ENCODE measurements at regions of chr9 and their contacts with region 1.

Region 1: GRCh38 chr9:27967210-27967609 is 393.9 kb upstream of the C9orf72 start:
- DNase-seq: no peak
- H3K4me3 Mint-ChIP-seq: no peak overlapping the region
- H3K27ac Mint-ChIP-seq: no peak overlapping the region
- H3K4me1 Mint-ChIP-seq: no peaks in the 10 kb centered on the region
- H3K27me3 Mint-ChIP-seq: no peaks in the 10 kb centered on the region

Region 2: GRCh38 chr9:27829621-27830020 is 137.6 kb before region 1 on chr9:
- intact Hi-C with region 1: no loop called
- DNase-seq: no peak
- H3K4me3 Mint-ChIP-seq: no peak overlapping the region
- H3K27ac Mint-ChIP-seq: no peak overlapping the region
- H3K4me1 Mint-ChIP-seq: no peaks in the 10 kb centered on the region
- H3K27me3 Mint-ChIP-seq: no peaks in the 10 kb centered on the region

Region 3: GRCh38 chr9:28024676-28025075 is 57.5 kb after region 1 on chr9:
- intact Hi-C with region 1: loop called (anchors 10 kb)
- DNase-seq: no peak
- H3K4me3 Mint-ChIP-seq: no peak overlapping the region
- H3K27ac Mint-ChIP-seq: no peak overlapping the region
- H3K4me1 Mint-ChIP-seq: no peaks in the 10 kb centered on the region
- H3K27me3 Mint-ChIP-seq: no peaks in the 10 kb centered on the region

Measured in activated T-helper 2 cell treated with anti-CD3 and anti-CD28 coated beads, Interferon-gamma antibody, Interleukin-2, Interleukin-4, amounts not matched to agents 10 μg/mL and 5 μg/mL and 100 μg/mL, durations not matched to agents 14 hours and 24 hours and 36 hours (primary cell).